PC-9 (cell line): ENCODE measurements at regions of chr16 and their contacts with region 1.

Region 1: DNA sequence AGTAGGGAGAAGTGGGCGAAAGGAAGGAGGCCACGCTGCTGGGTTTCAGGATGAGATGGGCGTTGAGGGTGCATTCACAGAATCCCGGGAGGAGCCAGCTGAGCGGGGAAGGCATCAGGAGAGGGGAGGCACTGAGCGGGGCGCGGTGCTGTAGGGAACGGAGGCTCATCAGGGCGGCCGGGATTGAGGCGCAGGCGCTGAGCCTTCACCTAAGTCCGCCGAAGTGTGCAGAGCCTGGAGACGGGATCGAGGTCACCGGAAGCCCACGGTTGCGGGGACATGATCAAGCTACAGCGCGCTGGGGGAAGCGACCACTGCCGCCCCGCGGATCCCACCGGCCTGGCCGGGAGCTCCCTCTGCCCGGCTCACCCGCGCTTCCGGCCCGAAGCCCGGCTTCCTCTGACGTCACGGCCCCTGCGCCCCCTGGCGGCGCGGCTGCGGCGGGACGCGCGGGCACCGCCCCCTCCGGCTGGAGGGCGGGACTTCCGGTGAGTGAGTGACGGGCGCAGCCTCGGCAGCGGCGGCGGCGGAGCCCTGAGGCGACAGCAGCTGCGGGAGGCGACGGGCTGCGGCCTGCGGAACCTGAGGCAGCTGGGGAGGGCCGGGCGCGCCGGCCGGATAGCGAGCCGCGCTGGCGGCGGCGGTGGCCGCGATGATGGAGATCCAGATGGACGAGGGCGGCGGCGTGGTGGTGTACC is at the start of gene MAPK8IP3:
- DNase-seq: peak; percentile 69 to 99
- H3K4me3 ChIP-seq: peak within 1 kb of the TSS; percentile 100
- H3K27ac ChIP-seq: peak within 1 kb of the TSS; percentile 72
- H3K4me1 ChIP-seq: peaks cover 18% of the 10 kb centered on the region
- H3K27me3 ChIP-seq: no peaks in the 10 kb centered on the region
- CTCF ChIP-seq: peak; percentile 74
- total RNA-seq, gene MAPK8IP3: 119 and 125 TPM in 2 replicates

Region 2: GRCh38 chr16:1474796-1475551 is 230.9 kb before region 1 on chr16 and contains the start of gene CLCN7:
- CTCF ChIA-PET with region 1: no interaction called
- POLR2A ChIA-PET with region 1: interaction called, 13 read pairs
- intact Hi-C with region 1: no loop called
- DNase-seq: peak; percentile 51 to 92
- H3K4me3 ChIP-seq: peak within 1 kb of the TSS; percentile 99
- H3K27ac ChIP-seq: peak within 1 kb of the TSS; percentile 65
- H3K4me1 ChIP-seq: peaks cover 12% of the 10 kb centered on the region
- H3K27me3 ChIP-seq: no peaks in the 10 kb centered on the region
- CTCF ChIP-seq: no peak
- total RNA-seq, gene CLCN7: 110 and 111 TPM in 2 replicates

Region 3: DNA sequence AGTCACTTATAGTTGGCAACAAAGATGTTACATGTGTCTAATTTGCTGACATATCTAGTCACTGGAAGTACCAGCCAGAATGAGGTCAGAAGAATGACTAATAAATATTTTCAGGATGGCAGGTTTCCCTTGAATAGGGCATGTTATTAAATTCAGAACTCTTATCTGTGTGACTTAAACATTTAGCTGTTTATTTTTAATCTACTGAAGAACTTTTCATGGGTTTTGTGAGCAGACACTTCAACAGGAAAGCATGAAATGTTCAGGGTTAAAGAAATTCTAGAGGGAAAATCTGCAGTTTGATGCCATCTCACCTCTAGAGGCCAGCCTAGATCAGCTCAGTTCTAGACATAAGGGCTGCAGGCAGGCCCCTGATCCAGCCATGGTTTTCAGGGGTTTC is 14.6 kb before region 1 on chr16:
- CTCF ChIA-PET with region 1: interaction called, 13 read pairs
- POLR2A ChIA-PET with region 1: interaction called, 15 read pairs
- intact Hi-C with region 1: no loop called
- DNase-seq: peak in 1 of 2 experiments; percentile 46
- H3K4me3 ChIP-seq: no peak overlapping the region
- H3K27ac ChIP-seq: peak overlapping the region; percentile 99
- H3K4me1 ChIP-seq: peaks cover 64% of the 10 kb centered on the region
- H3K27me3 ChIP-seq: no peaks in the 10 kb centered on the region
- CTCF ChIP-seq: no peak; the same call in 1 of the 2 replicates

Region 4: GRCh38 chr16:1745181-1745899 is 39.5 kb after region 1 on chr16:
- CTCF ChIA-PET with region 1: interaction called, 7 read pairs
- POLR2A ChIA-PET with region 1: interaction called, 6 read pairs
- intact Hi-C with region 1: loop called (anchors 1 kb)
- DNase-seq: peak; percentile 91 to 94
- H3K4me3 ChIP-seq: peak overlapping the region; percentile 49; the same call in 1 of the 2 replicates
- H3K27ac ChIP-seq: peak overlapping the region; percentile 100
- H3K4me1 ChIP-seq: peaks cover 49% of the 10 kb centered on the region
- H3K27me3 ChIP-seq: no peaks in the 10 kb centered on the region
- CTCF ChIP-seq: no peak; the same call in 1 of the 2 replicates

Region 5: GRCh38 chr16:1782352-1783091 is 76.7 kb after region 1 on chr16 and contains the starts of genes NUBP2 and SPSB3:
- CTCF ChIA-PET with region 1: interaction called, 9 read pairs
- POLR2A ChIA-PET with region 1: interaction called, 11 read pairs
- intact Hi-C with region 1: no loop called
- DNase-seq: peak; percentile 99 to 100
- H3K4me3 ChIP-seq: peak within 1 kb of the TSS; percentile 93
- H3K27ac ChIP-seq: peak within 1 kb of the TSS; percentile 50; the same call in 1 of the 2 replicates
- H3K4me1 ChIP-seq: peaks cover 15% of the 10 kb centered on the region
- H3K27me3 ChIP-seq: no peaks in the 10 kb centered on the region
- CTCF ChIP-seq: no peak
- total RNA-seq, gene NUBP2: 80.0 and 103 TPM in 2 replicates
- total RNA-seq, gene SPSB3: 58.2 and 86.6 TPM in 2 replicates